Activated CD4-positive, alpha-beta memory T cell treated with anti-CD3 and anti-CD28 coated beads for 36 hours (primary cell): ENCODE measurements at regions of chr13 and their contacts with region 1.

Region 1: DNA sequence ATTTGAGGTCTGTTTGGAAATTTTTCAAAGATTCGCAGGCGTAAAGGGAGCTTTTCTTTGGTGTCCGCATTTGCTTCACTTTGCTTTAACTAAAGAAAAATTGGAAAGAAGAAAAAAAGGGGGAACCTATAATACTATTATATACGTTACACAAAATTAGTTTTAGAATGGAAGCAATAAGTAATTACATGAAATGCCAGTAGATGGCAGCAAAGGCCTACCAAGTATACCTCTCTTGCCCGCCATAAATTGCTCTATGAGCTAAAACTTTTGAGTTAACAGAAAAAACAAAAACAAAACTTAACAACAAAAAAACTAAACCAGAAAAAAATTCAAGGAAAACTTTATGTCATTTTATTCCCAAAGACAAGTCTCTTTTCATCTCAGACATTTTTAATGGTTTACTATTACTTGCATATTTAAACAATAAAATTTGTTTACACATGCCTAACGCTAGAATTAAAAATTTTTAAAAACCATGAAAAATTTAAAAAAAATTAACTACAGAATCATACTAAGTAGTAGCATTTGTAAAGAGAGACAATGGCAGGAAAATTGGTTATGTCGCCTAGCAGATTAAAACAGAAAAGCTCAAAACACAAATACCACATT is 271.4 kb downstream of the NALCN start:
- DNase-seq: no peak
- H3K4me3 Mint-ChIP-seq: no peak overlapping the region
- H3K27ac Mint-ChIP-seq: no peak overlapping the region
- H3K4me1 Mint-ChIP-seq: no peaks in the 10 kb centered on the region
- H3K27me3 Mint-ChIP-seq: peaks cover 22% of the 10 kb centered on the region

Region 2: DNA sequence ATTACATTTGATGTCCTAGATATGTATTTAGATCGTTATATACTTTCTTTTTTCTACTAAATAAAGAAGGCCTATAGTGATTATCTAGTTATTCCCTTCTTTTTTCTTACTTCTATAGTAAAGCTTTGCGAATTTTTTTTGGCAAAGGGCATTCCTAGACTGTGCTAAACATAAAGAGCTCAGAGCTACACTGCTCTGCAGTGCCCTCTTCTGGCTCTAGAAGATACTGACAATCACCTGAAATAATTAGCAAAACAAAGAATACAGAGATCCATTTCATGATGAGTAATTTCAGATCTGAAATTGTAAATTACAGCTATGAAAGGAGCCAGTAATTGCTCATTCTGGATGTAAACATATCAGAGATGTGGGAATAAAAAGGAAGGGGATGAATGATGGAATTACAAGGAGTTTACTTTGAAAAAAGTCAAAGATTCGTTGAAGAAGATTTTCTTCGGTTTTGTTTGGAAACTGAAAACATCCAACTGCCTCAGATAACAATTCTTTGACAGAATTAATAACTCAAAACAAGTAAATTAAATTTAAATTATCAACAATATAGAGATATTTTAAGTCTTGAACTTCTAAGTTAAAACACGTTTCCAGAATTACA is 17.1 kb before region 1 on chr13:
- CTCF ChIA-PET with region 1: interaction called, 18 read pairs
- POLR2A ChIA-PET with region 1: no interaction called
- intact Hi-C with region 1: no loop called
- DNase-seq: peak; percentile 17
- H3K4me3 Mint-ChIP-seq: no peak overlapping the region
- H3K27ac Mint-ChIP-seq: no peak overlapping the region
- H3K4me1 Mint-ChIP-seq: peaks cover 2% of the 10 kb centered on the region
- H3K27me3 Mint-ChIP-seq: peaks cover 4% of the 10 kb centered on the region

Region 3: GRCh38 chr13:101307181-101307701 is 162.3 kb after region 1 on chr13:
- CTCF ChIA-PET with region 1: no interaction called
- POLR2A ChIA-PET with region 1: no interaction called
- intact Hi-C with region 1: loop called (anchors 10 kb)
- DNase-seq: no peak
- H3K4me3 Mint-ChIP-seq: no peak overlapping the region
- H3K27ac Mint-ChIP-seq: no peak overlapping the region
- H3K4me1 Mint-ChIP-seq: no peaks in the 10 kb centered on the region
- H3K27me3 Mint-ChIP-seq: peaks cover 2% of the 10 kb centered on the region

Region 4: DNA sequence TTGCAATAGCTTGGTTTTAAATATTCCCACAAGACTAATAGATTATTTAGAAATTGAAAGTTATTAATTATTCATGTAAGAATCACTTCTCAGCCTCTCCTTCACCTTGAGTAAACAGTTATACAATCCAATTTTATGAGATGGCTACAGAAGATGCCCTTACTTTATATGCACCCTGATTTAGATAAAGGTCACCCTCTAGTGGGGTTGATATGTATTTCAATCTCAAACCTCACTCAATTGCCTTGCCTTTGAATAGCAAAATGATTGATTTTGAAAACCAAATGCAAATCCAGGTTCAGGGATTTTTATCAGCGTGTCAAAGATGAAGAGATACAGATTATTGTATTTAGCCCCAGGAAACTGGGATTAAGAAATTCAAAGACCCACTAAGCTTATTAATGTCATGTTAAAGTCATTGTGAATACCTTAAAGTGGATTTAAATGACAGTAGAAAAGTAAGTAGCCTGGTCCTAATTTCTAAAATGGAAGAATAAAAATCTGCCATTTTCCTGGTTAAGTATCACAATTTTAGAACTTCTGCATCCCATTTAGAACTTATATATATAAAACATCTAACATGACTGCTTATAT is 612.6 kb after region 1 on chr13:
- CTCF ChIA-PET with region 1: interaction called, 29 read pairs
- POLR2A ChIA-PET with region 1: no interaction called
- intact Hi-C with region 1: loop called (anchors 1 kb)
- DNase-seq: no peak
- H3K4me3 Mint-ChIP-seq: no peak overlapping the region
- H3K27ac Mint-ChIP-seq: no peak overlapping the region
- H3K4me1 Mint-ChIP-seq: no peaks in the 10 kb centered on the region
- H3K27me3 Mint-ChIP-seq: peaks cover 15% of the 10 kb centered on the region

Region 5: DNA sequence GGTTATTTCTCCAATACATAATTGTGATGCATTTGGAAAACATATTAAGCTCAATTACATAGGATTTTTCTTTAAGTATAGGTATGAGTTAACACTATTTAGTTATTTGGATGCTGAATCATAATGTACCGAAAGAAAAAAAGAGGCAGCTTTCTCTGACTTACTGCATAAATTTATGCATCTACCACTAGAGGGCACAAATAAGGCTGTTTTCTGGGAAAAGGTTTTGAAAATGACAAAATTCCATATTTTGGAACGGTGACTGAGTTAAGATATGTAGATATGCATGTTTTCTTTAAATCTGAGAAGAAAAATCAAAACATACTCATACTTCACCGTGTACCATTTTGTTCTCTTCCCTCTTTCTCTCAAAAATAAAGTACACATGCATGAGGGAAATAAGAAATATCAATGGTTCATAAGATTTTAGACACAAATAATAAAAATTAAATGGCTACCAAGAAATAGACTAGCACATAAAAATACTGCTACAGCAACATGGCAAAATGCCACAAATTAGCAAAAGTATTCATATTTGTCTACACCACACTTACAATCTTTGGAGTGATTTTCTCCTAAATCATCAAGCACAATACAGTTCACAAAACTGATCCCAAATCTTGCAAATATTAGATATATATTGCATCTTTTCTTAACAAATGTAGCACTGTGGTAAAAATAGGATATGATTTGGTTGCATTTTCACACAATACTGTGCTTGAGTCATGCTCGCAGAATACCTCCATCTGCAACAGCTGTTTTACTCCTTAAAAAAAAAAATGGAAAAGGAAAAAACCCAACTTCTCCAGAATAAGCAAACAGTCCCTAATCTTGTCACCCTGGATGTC is 996.9 kb after region 1 on chr13:
- CTCF ChIA-PET with region 1: no interaction called
- POLR2A ChIA-PET with region 1: no interaction called
- intact Hi-C with region 1: loop called (anchors 10 kb)
- DNase-seq: no peak
- H3K4me3 Mint-ChIP-seq: no peak overlapping the region
- H3K27ac Mint-ChIP-seq: no peak overlapping the region
- H3K4me1 Mint-ChIP-seq: no peaks in the 10 kb centered on the region
- H3K27me3 Mint-ChIP-seq: no peaks in the 10 kb centered on the region

Region 6: DNA sequence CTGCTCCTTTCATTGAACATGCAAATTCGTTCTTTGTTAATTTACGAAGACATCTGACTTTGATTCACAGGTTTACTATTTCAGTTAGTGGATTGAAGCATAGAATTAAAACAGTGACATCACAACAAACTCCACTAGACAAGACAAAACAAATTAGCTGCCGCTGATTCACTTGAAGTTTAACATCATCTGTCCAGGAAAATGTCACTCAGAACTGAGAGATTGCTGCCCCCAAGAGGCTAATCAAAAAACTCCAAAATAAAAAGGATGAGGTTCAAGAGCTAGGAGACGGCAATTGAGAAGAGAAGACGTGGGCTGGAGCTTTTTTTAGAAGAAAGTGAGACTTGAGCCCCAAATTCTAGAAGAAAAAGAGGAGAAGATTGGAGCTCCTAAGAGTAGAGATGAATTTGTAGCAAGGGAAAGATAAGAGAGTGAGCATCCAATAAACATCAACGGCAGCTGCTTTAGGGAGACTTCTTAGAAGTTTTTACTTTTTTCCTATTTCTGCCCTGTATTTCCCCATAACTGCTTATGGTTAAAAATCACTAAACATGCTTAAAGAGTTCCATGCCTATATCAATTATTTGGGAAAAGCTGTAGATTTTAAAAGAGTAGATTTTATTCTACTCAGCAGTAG is 1411.1 kb after region 1 on chr13:
- CTCF ChIA-PET with region 1: interaction called, 19 read pairs
- POLR2A ChIA-PET with region 1: no interaction called
- intact Hi-C with region 1: loop called (anchors 10 kb)
- DNase-seq: no peak
- H3K4me3 Mint-ChIP-seq: no peak overlapping the region
- H3K27ac Mint-ChIP-seq: no peak overlapping the region
- H3K4me1 Mint-ChIP-seq: no peaks in the 10 kb centered on the region
- H3K27me3 Mint-ChIP-seq: peaks cover 4% of the 10 kb centered on the region